Activated CD8-positive, alpha-beta T cell treated with anti-CD3 and anti-CD28 coated beads, Interleukin-2, amount 10 ng/mL, durations not matched to agents 7 days and 5 days (primary cell): ENCODE measurements at regions of chr3 and their contacts with region 1.

Region 1: GRCh38 chr3:8759038-8759707 is 10.2 kb downstream of the OXTR start:
- DNase-seq: no peak
- ATAC-seq: no peak
- H3K4me3 Mint-ChIP-seq: no peak overlapping the region
- H3K27ac Mint-ChIP-seq: no peak overlapping the region
- H3K4me1 Mint-ChIP-seq: no peaks in the 10 kb centered on the region
- H3K27me3 Mint-ChIP-seq: peaks cover 3% of the 10 kb centered on the region

Region 2: GRCh38 chr3:8743911-8744310 is 15.3 kb before region 1 on chr3:
- CTCF ChIA-PET with region 1: no interaction called
- POLR2A ChIA-PET with region 1: no interaction called
- DNase-seq: no peak
- ATAC-seq: no peak
- H3K4me3 Mint-ChIP-seq: no peak overlapping the region
- H3K27ac Mint-ChIP-seq: no peak overlapping the region
- H3K4me1 Mint-ChIP-seq: peaks cover 3% of the 10 kb centered on the region
- H3K27me3 Mint-ChIP-seq: peaks cover 7% of the 10 kb centered on the region

Region 3: DNA sequence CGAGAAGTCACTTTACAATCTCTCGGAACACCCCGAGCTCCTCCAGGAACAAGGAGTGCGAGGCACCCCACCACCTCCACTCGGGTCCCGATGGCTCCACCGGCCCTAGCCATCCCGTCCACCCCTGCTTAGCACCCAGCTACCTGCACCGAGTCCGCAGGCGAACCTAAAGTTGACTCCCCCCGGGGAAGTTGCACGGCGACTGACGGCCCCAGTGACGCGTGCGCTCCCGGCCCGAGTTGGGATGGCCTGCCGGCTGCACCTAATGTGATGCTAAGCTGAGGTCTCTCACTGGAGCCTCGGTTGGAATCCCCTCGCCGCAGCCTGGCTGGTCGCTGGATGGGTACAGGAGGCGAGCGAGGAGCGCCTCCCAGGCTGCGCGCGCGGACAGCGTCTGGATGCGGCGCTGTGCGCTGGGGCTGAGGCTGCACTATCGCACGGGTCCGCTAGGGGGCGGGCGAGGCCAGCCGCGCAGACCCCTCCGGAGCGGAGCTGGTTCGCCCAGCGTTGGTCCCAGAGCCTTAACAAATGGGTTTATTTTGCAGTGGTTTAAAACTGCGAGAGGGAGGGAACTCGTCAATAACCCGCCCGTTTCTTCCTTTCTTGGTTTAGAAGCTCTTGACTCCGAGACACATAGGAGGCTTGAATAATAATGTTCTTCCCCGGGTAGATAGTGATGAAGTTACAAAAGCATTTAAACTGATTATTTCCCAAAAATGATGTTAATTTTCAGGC is 10.1 kb after region 1 on chr3 and contains the start of gene OXTR:
- CTCF ChIA-PET with region 1: interaction called, 11 read pairs
- POLR2A ChIA-PET with region 1: no interaction called
- DNase-seq: peak; percentile 65
- ATAC-seq: peak; percentile 93
- H3K4me3 Mint-ChIP-seq: peak within 1 kb of the TSS; percentile 55
- H3K27ac Mint-ChIP-seq: no peak within 1 kb of the TSS
- H3K4me1 Mint-ChIP-seq: peaks cover 14% of the 10 kb centered on the region
- H3K27me3 Mint-ChIP-seq: peaks cover 54% of the 10 kb centered on the region
- total RNA-seq, gene OXTR: 0.70 to 0.71 TPM